Mammary epithelial cell (primary cell): ENCODE measurements at regions of chr5 and their contacts with region 1.

Region 1: GRCh38 chr5:15263942-15264341 is 236.0 kb upstream of the FBXL7 start:
- DNase-seq: no peak
- H3K4me3 ChIP-seq: no peak overlapping the region
- H3K27ac ChIP-seq: no peak overlapping the region
- H3K4me1 ChIP-seq: no peaks in the 10 kb centered on the region
- H3K27me3 ChIP-seq: no peaks in the 10 kb centered on the region
- CTCF ChIP-seq: no peak

Region 2: DNA sequence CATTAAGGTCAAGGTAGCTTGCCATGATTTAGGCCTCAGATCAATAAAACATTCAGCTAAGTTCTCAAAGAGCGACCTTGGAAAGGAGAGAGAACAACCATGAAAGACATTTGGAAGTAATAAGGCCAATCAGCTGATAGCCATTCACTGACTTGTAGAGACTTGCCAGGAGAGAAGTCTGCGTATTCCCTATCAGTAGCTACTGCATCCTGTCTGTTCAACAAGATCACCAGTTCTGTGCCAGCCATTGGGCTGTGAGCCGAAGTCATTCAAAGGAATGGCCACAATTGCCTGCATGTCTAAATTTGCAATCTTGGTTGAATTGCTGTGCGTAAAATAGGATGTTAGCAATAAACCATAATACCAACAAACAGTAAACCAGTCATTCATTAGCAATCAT is 455.8 kb after region 1 on chr5:
- CTCF ChIA-PET with region 1: interaction called, 11 read pairs
- dilution Hi-C with region 1: no loop called
- in situ Hi-C with region 1: no loop called
- intact Hi-C with region 1: no loop called
- DNase-seq: no peak
- H3K4me3 ChIP-seq: no peak overlapping the region
- H3K27ac ChIP-seq: no peak overlapping the region
- H3K4me1 ChIP-seq: no peaks in the 10 kb centered on the region
- H3K27me3 ChIP-seq: no peaks in the 10 kb centered on the region
- CTCF ChIP-seq: no peak

Region 3: DNA sequence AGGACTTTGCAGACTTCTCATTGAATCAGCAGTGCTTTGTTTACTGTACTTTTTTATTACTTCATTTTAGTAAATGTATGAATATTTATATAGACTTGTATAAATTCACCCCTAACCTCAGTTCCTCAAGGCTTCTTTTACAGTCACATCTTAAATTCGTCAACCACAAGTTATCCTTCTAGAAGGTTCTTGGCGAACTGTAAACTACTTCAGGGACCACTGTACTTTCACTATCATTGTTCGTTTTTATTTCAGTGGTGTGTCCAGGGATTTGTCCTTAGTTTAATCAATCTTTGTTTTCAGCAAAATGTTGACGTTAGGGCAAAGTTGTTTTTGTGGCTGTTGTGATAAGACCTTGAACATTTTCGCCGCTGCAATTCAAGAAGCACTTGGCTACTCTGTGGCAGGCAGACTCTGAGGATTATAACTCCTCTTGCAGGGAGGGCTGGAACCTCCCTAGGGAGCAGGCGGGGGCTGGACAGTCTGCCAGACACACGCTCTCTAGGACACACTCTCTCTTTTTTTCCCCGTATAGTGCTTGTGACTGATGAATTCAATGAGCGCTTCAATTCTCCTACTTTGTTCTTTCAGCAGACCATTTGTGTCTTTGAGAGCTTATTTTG is 488.8 kb after region 1 on chr5:
- CTCF ChIA-PET with region 1: no interaction called
- dilution Hi-C with region 1: no loop called
- in situ Hi-C with region 1: no loop called
- intact Hi-C with region 1: no loop called
- DNase-seq: no peak
- H3K4me3 ChIP-seq: no peak overlapping the region
- H3K27ac ChIP-seq: no peak overlapping the region
- H3K4me1 ChIP-seq: no peaks in the 10 kb centered on the region
- H3K27me3 ChIP-seq: no peaks in the 10 kb centered on the region
- CTCF ChIP-seq: no peak